Activated T-helper 2 cell treated with anti-CD3 and anti-CD28 coated beads, Interferon-gamma antibody, Interleukin-2, Interleukin-4, amounts not matched to agents 10 μg/mL and 5 μg/mL and 100 μg/mL, durations not matched to agents 14 hours and 24 hours and 36 hours (primary cell): ENCODE measurements at regions of chr7 and their contacts with region 1.

Region 1: DNA sequence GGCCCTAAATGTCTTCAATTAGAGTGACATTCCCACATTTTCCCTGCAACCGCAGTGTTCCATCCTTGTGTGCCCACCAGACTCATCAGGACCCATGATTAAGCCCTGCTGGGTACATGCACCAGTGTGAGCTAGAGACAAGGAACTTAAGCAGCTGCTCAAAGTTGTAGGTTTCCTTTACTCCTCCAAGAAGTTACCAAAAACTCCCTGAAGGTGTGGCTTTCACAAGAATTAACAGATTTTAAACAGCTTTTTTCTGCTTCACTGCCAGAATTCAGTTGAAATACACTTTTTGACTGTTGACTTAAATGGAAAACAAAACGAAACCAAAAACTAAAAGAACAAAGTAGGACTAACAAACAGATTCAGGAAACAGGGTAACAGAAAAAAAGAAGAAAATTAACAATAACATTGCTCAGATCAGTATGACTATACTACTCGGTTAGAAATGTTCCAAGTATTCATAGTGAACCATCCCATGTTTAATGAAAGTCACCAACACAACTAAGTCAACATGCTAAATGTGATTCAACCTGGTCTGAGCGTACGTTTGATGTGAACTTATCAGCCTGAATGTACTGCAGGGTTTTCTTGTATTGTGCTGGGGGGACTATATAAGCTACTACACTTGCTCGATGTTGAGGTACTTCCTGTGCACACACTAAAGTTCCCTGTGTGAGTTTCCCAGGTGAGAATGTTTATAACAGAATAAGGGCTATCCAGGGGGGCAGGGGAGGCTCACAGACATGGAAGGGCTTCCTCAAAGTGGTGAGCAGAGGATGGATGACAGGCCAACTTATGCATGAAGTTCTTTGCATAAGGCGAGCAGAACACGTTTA is 22.2 kb downstream of the SLC37A3 start:
- DNase-seq: peak; percentile 26
- H3K4me3 Mint-ChIP-seq: peak overlapping the region; percentile 65
- H3K27ac Mint-ChIP-seq: peak overlapping the region; percentile 97
- H3K4me1 Mint-ChIP-seq: peaks cover 51% of the 10 kb centered on the region
- H3K27me3 Mint-ChIP-seq: no peaks in the 10 kb centered on the region

Region 2: GRCh38 chr7:140209866-140210609 is 166.1 kb before region 1 on chr7:
- intact Hi-C with region 1: loop called (anchors 5 kb)
- DNase-seq: peak; percentile 62
- H3K4me3 Mint-ChIP-seq: peak overlapping the region; percentile 49
- H3K27ac Mint-ChIP-seq: peak overlapping the region; percentile 70
- H3K4me1 Mint-ChIP-seq: peaks cover 61% of the 10 kb centered on the region
- H3K27me3 Mint-ChIP-seq: peaks cover 3% of the 10 kb centered on the region

Region 3: DNA sequence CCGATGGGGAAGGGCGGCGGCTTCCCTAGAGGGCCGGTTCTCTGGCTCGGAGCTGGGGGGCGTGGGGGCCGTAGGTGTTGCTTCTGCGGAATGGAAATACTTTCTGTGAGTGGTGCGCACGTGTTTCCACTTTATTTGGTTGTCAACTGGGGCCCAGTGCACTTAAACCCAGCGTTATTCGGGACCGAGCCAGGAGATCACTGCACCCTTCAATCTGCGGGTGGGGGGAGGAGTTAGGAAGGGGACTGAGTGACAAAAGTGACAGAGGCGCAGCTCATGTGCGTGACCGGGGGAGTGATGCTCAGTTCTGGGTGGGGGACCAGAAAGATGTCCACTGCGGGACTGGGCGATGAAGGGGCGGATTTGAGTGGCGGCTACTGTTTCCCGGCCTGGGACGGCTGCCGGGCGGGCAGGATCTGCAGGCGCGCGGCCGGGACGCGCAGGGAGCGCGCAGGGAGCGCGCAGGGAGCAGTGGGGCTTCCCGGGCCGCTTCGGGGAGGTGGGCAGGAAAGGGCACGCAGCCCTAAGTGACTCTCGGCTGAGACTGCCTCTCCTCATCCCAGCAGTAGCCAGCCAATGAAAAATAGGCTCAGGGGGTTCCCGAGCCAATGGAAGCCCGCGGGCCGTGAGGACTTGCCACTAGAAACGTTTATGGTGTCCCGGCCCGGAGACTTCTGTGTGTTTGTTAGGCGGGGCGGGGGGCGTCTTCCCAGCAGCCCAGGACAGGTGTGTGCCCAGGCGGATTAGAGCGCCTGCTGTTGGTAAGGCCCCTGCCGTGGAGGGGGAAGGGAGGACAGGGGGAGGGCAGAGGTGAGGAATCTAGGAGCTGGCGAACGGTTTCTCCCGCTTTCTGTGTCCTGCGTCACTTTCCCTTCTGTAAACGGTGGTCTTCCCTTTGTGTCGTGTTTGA is 145.0 kb before region 1 on chr7:
- intact Hi-C with region 1: loop called (anchors 5 kb)
- DNase-seq: peak; percentile 45
- H3K4me3 Mint-ChIP-seq: peak overlapping the region; percentile 86
- H3K27ac Mint-ChIP-seq: peak overlapping the region; percentile 92
- H3K4me1 Mint-ChIP-seq: peaks cover 27% of the 10 kb centered on the region
- H3K27me3 Mint-ChIP-seq: no peaks in the 10 kb centered on the region

Region 4: GRCh38 chr7:140326116-140326928 is 49.8 kb before region 1 on chr7:
- intact Hi-C with region 1: no loop called
- DNase-seq: peak; percentile 47
- H3K4me3 Mint-ChIP-seq: no peak overlapping the region
- H3K27ac Mint-ChIP-seq: peak overlapping the region; percentile 28
- H3K4me1 Mint-ChIP-seq: peaks cover 1% of the 10 kb centered on the region
- H3K27me3 Mint-ChIP-seq: no peaks in the 10 kb centered on the region

Region 5: GRCh38 chr7:140358412-140359051 is 17.6 kb before region 1 on chr7:
- intact Hi-C with region 1: loop called (anchors 1 kb)
- DNase-seq: peak; percentile 16
- H3K4me3 Mint-ChIP-seq: peak overlapping the region; percentile 62
- H3K27ac Mint-ChIP-seq: peak overlapping the region; percentile 97
- H3K4me1 Mint-ChIP-seq: peaks cover 29% of the 10 kb centered on the region
- H3K27me3 Mint-ChIP-seq: no peaks in the 10 kb centered on the region

Region 6: GRCh38 chr7:140390466-140391190 is 14.5 kb after region 1 on chr7:
- intact Hi-C with region 1: loop called (anchors 1 kb)
- DNase-seq: no peak
- H3K4me3 Mint-ChIP-seq: no peak overlapping the region
- H3K27ac Mint-ChIP-seq: no peak overlapping the region
- H3K4me1 Mint-ChIP-seq: peaks cover 5% of the 10 kb centered on the region
- H3K27me3 Mint-ChIP-seq: no peaks in the 10 kb centered on the region

Region 7: GRCh38 chr7:140451716-140452115 is 75.6 kb after region 1 on chr7:
- intact Hi-C with region 1: loop called (anchors 5 kb)
- DNase-seq: no peak
- H3K4me3 Mint-ChIP-seq: no peak overlapping the region
- H3K27ac Mint-ChIP-seq: peak overlapping the region; percentile 68
- H3K4me1 Mint-ChIP-seq: peaks cover 83% of the 10 kb centered on the region
- H3K27me3 Mint-ChIP-seq: no peaks in the 10 kb centered on the region